WTC11 (cell line): ENCODE measurements at regions of chr1 and their contacts with region 1.

Region 1: GRCh38 chr1:20696397-20697329 is 21.1 kb downstream of the KIF17 start:
- DNase-seq: peak; percentile 87
- ATAC-seq: peak; percentile 89
- H3K4me3 Mint-ChIP-seq: peak overlapping the region; percentile 79
- H3K27ac Mint-ChIP-seq: peak overlapping the region; percentile 77; the same call in 1 of the 2 replicates
- H3K4me1 Mint-ChIP-seq: peaks cover 11% of the 10 kb centered on the region
- H3K27me3 Mint-ChIP-seq: peaks cover 2% of the 10 kb centered on the region
- CTCF ChIP-seq: peak; percentile 97

Region 2: DNA sequence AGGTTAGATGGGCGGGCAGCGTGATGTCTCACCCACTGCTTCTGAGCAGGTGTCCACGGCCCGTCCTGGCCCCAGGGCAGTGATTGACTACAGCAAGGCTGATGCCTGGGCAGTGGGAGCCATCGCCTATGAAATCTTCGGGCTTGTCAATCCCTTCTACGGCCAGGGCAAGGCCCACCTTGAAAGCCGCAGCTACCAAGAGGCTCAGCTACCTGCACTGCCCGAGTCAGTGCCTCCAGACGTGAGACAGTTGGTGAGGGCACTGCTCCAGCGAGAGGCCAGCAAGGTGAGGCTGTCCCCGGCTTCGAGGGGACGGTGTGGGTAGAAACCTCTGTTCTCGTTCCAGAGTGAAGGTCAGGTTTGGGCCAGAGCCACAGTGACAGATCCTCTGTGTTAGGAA is 47.7 kb before region 1 on chr1:
- CTCF ChIA-PET with region 1: interaction called, 10 read pairs
- POLR2A ChIA-PET with region 1: interaction called, 4 read pairs
- DNase-seq: no peak
- ATAC-seq: no peak
- H3K4me3 Mint-ChIP-seq: no peak overlapping the region
- H3K27ac Mint-ChIP-seq: peak overlapping the region; percentile 63; the same call in 1 of the 2 replicates
- H3K4me1 Mint-ChIP-seq: no peaks in the 10 kb centered on the region
- H3K27me3 Mint-ChIP-seq: no peaks in the 10 kb centered on the region
- CTCF ChIP-seq: no peak

Region 3: DNA sequence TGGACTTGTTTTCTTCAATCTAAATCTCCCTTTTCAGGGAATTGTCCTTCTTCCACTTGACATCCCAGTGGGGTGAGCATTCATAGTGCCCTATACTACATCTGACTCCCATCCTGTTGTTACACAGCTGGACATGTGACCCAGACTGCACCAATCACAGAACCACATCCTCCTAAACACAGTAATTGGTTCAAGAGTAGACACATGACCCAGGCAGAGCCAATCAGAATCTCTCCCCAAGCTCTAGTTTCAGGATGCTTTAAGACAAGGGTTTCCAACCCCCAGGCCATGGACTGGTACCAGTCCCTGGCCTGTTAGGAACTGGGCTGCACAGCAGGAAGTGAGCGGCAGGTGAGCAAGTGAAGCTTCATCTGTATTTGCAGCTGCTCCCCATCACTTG is 29.9 kb before region 1 on chr1:
- CTCF ChIA-PET with region 1: interaction called, 24 read pairs
- POLR2A ChIA-PET with region 1: no interaction called
- DNase-seq: no peak
- ATAC-seq: peak; percentile 28; the same call in 1 of the 2 replicates
- H3K4me3 Mint-ChIP-seq: no peak overlapping the region
- H3K27ac Mint-ChIP-seq: no peak overlapping the region
- H3K4me1 Mint-ChIP-seq: peaks cover 9% of the 10 kb centered on the region
- H3K27me3 Mint-ChIP-seq: no peaks in the 10 kb centered on the region
- CTCF ChIP-seq: no peak

Region 4: DNA sequence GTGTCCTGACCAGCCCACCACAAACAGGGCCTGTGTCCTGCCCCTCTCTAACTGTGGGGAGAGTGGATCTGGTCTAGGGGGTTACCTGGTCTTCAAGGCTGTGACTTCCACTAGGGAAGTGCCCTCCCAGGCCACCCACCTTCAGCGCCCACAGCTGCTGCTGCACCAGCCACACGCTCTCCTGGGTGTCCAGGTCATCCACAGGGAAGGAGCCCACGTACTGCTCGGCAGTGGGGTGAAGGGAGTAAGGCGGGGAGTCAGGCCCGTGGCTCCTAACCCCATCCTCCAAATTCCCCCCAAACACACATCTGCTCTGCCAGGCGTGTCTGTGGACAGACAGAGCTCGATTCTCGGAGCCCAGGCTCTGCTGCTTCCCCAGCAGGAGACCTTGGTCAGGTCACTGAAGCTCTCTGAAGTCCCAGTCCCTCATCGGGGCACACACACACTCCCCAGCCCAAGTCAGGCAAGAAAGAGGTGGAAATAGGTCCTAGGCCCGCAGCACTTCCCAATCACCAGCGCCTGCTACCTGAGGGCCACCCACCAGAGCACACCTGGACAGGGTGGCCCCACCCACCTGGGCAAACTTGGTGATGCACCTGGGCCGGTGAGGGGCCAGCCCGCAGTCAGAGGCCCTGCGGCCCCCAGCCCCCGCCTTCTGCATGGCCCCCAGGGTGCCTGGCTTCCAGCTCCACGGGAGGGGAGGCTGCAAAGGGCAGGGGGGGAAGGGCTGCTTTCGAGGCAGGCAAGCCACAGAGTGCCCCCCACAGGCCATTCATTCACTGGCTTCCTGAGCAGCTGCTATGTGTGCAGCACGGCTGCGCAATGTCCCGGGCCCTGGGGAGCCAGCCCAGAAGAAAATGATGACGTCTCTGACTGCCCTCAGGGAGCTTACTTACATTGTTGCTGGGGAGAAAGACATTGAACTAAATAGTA is 31.0 kb after region 1 on chr1:
- CTCF ChIA-PET with region 1: interaction called, 124 read pairs
- POLR2A ChIA-PET with region 1: interaction called, 4 read pairs
- DNase-seq: peak; percentile 68
- ATAC-seq: peak; percentile 17
- H3K4me3 Mint-ChIP-seq: peak overlapping the region; percentile 53
- H3K27ac Mint-ChIP-seq: peak overlapping the region; percentile 66
- H3K4me1 Mint-ChIP-seq: peaks cover 29% of the 10 kb centered on the region
- H3K27me3 Mint-ChIP-seq: peaks cover 24% of the 10 kb centered on the region
- CTCF ChIP-seq: no peak

Region 5: GRCh38 chr1:20751462-20751990 is 54.9 kb after region 1 on chr1:
- CTCF ChIA-PET with region 1: interaction called, 13 read pairs
- POLR2A ChIA-PET with region 1: no interaction called
- DNase-seq: no peak
- ATAC-seq: no peak
- H3K4me3 Mint-ChIP-seq: no peak overlapping the region
- H3K27ac Mint-ChIP-seq: no peak overlapping the region
- H3K4me1 Mint-ChIP-seq: 0 out of 2 replicates have a peak, but pooled peaks cover 5% of the 10 kb centered on the region
- H3K27me3 Mint-ChIP-seq: no peaks in the 10 kb centered on the region
- CTCF ChIP-seq: no peak

Region 6: GRCh38 chr1:21200767-21201166 is 504.1 kb after region 1 on chr1:
- CTCF ChIA-PET with region 1: interaction called, 41 read pairs
- POLR2A ChIA-PET with region 1: interaction called, 5 read pairs
- DNase-seq: no peak
- ATAC-seq: no peak
- H3K4me3 Mint-ChIP-seq: no peak overlapping the region
- H3K27ac Mint-ChIP-seq: no peak overlapping the region
- H3K4me1 Mint-ChIP-seq: no peaks in the 10 kb centered on the region
- H3K27me3 Mint-ChIP-seq: peaks cover 36% of the 10 kb centered on the region
- CTCF ChIP-seq: no peak